Mucosa of descending colon (tissue), 3 donors: ENCODE measurements at regions of chr1 and their contacts with region 1.

Region 1: DNA sequence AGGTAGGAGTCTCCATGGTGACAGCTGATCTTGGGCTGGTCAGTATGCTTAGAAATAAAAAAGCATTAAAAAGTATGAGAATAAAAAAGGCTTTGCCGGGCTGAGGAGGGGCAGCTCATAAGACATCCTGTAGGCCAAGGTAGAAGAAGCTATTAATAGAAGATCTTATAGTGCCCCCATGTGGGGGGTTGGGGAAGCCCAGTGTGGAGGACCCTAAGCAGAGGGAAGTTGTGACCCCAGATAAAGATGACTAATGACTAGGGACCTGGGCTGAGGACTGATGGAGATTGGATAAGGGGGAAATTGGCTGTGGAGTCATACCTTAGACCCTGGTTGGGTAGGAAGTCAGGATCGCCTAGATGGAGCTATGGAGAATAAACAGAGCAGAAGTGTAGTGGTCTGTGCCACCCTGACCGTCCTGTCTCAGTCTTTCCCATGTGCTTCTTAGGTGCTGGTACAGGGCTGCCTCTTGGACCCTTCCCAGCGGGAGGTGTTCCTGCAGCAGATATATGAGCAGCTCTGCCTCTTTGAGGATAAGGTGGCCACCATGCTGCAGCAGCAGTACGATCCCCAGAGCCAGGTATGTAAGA is 25.0 kb downstream of the SZT2 start:
- DNase-seq: peak in 1 of 3 donors; percentile 84
- ATAC-seq: peak; percentile 82
- H3K4me3 ChIP-seq: no peak overlapping the region
- H3K4me1 ChIP-seq: no peaks in the 10 kb centered on the region
- CTCF ChIP-seq: peak; percentile 48

Region 2: GRCh38 chr1:43227143-43227764 is 187.5 kb before region 1 on chr1:
- intact Hi-C with region 1: loop called (anchors 10 kb)
- DNase-seq: peak; percentile 69 to 95 (median 84)
- ATAC-seq: peak; percentile 92
- H3K4me3 ChIP-seq: no peak overlapping the region
- H3K4me1 ChIP-seq: no peaks in the 10 kb centered on the region
- CTCF ChIP-seq: peak; percentile 89

Region 3: DNA sequence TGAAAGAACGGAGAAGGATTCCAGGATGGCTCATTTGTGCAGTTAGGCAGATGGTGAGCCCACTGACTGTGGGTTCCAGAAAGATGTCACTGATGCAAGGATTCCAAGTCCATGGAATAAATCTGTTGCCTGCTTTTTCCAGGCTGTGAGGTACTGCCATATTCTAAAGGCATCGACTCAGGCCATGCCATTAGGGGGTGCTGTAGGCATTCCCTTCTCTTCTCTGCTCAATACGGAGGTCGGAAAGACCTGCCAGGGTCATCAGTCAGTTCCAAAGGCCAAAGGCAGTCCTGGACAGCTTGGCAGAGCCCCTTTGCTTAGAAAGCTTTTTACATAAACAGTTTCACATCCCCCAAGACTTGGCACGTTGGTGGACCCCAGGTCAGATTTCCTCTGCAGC is 176.6 kb before region 1 on chr1:
- intact Hi-C with region 1: loop called in 1 of 2 experiments (anchors 10 kb)
- DNase-seq: peak in 2 of 3 donors; percentile 72 to 92
- ATAC-seq: peak; percentile 83
- H3K4me3 ChIP-seq: no peak overlapping the region
- H3K4me1 ChIP-seq: peaks cover 15% of the 10 kb centered on the region
- CTCF ChIP-seq: peak; percentile 65

Region 4: DNA sequence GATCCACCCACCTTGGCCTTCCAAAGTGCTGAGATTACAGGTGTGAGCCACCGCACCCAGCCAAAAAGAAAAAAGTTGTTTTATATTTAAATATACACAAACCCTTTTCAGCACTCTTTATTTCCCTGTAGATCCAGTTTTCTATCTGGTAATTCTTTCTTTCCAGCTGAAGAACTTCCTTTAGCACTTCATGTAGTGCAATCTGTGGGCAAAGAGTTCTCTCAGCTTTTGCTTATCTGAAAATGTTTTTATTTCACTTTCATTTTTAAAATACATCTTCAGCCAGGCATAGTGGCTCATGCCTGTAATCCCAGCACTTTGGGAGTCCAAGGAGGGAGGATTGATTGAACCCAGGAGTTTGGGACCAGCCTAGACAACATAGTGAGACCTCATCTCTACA is 67.5 kb after region 1 on chr1:
- intact Hi-C with region 1: no loop called
- DNase-seq: no peak
- ATAC-seq: peak; percentile 65
- H3K4me3 ChIP-seq: no peak overlapping the region
- H3K4me1 ChIP-seq: peaks cover 4% of the 10 kb centered on the region
- CTCF ChIP-seq: no peak